ENCODE measurements at regions of chrX and their contacts with region 1.

Region 1: GRCh38 chrX:86946569-86946968 is 571.0 kb upstream of the KLHL4 start:
- DNase-seq: peak; percentile 43
- ATAC-seq: 0 out of 2 replicates have a peak, but pooled peaks have one; percentile 24
- H3K4me3 ChIP-seq: no peak overlapping the region
- H3K27ac ChIP-seq: no peak overlapping the region
- H3K4me1 ChIP-seq: no peaks in the 10 kb centered on the region
- H3K27me3 ChIP-seq: no peaks in the 10 kb centered on the region
- CTCF ChIP-seq: peak; percentile 63

Region 2: GRCh38 chrX:86133761-86134160 is 812.8 kb before region 1 on chrX:
- CTCF ChIA-PET with region 1: no interaction called
- POLR2A ChIA-PET with region 1: no interaction called
- intact Hi-C with region 1: loop called (anchors 5 kb)
- DNase-seq: no peak
- ATAC-seq: no peak
- H3K4me3 ChIP-seq: no peak overlapping the region
- H3K27ac ChIP-seq: no peak overlapping the region
- H3K4me1 ChIP-seq: no peaks in the 10 kb centered on the region
- H3K27me3 ChIP-seq: no peaks in the 10 kb centered on the region
- CTCF ChIP-seq: peak; percentile 58

Region 3: DNA sequence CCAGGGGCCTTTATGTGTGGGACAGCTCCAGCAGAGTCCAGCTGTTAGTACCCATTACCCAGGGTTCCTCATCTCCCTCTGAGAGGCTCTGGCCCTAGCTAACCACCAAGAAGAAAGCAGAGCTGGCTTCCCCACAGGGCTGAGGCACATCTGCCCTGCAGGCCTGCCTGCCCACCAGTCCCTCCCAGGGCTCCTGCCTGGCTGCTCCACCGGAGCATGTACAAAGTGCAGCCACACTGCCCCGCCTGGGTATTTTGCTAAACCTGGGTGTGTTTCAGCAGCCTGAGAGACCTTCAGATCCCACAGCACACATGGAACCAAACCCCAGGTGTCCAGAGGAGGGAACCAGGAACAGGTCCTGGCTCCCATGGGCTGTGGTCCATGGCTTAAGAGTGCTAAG is 70.6 kb after region 1 on chrX:
- CTCF ChIA-PET with region 1: no interaction called
- POLR2A ChIA-PET with region 1: no interaction called
- intact Hi-C with region 1: no loop called
- DNase-seq: no peak
- ATAC-seq: no peak
- H3K4me3 ChIP-seq: no peak overlapping the region
- H3K27ac ChIP-seq: no peak overlapping the region
- H3K4me1 ChIP-seq: no peaks in the 10 kb centered on the region
- H3K27me3 ChIP-seq: no peaks in the 10 kb centered on the region
- CTCF ChIP-seq: no peak

Region 4: GRCh38 chrX:87045352-87045751 is 98.8 kb after region 1 on chrX:
- CTCF ChIA-PET with region 1: no interaction called
- POLR2A ChIA-PET with region 1: no interaction called
- intact Hi-C with region 1: no loop called
- DNase-seq: no peak
- ATAC-seq: no peak
- H3K4me3 ChIP-seq: no peak overlapping the region
- H3K27ac ChIP-seq: no peak overlapping the region
- H3K4me1 ChIP-seq: no peaks in the 10 kb centered on the region
- H3K27me3 ChIP-seq: no peaks in the 10 kb centered on the region
- CTCF ChIP-seq: no peak

Measured in PC-3 (cell line).